H1 (cell line): ENCODE measurements at regions of chr13 and their contacts with region 1.

Region 1: GRCh38 chr13:40564342-40565001 is 102.0 kb downstream of the FOXO1 start:
- DNase-seq: no peak
- H3K4me3 ChIP-seq: no peak overlapping the region
- H3K27ac ChIP-seq: no peak overlapping the region
- H3K4me1 ChIP-seq: peaks cover 9 to 28% (median 15%) of the 10 kb centered on the region in 4 experiments
- H3K27me3 ChIP-seq: no peaks in the 10 kb centered on the region
- CTCF ChIP-seq: peak in 1 of 3 experiments; percentile 5; a peak in 1 of 4 replicates
- EP300 ChIP-seq: no peak
- POLR2A ChIP-seq: no peak
- RAD21 ChIP-seq: peak in 1 of 2 experiments; percentile 12; a peak in 1 of 4 replicates

Region 2: GRCh38 chr13:40578055-40578454 is 13.6 kb after region 1 on chr13:
- CTCF ChIA-PET with region 1: interaction called, 24 read pairs
- POLR2A ChIA-PET with region 1: interaction called, 3 read pairs
- DNase-seq: no peak
- H3K4me3 ChIP-seq: no peak overlapping the region
- H3K27ac ChIP-seq: no peak overlapping the region
- H3K4me1 ChIP-seq: peaks cover 8 to 33% (median 23%) of the 10 kb centered on the region in 4 experiments; a peak in 6 of 7 replicates
- H3K27me3 ChIP-seq: no peaks in the 10 kb centered on the region
- CTCF ChIP-seq: no peak
- EP300 ChIP-seq: no peak
- POLR2A ChIP-seq: no peak
- RAD21 ChIP-seq: no peak